Breast epithelium (tissue), 4 donors: ENCODE measurements at regions of chr12 and their contacts with region 1.

Region 1: GRCh38 chr12:63325757-63326156 is 174.8 kb upstream of the AVPR1A start:
- DNase-seq: no peak
- H3K4me3 ChIP-seq: no peak overlapping the region
- H3K27ac ChIP-seq: no peak overlapping the region
- H3K4me1 ChIP-seq: no peaks in the 10 kb centered on the region
- H3K27me3 ChIP-seq: no peaks in the 10 kb centered on the region
- CTCF ChIP-seq: no peak
- POLR2A ChIP-seq: no peak

Region 2: DNA sequence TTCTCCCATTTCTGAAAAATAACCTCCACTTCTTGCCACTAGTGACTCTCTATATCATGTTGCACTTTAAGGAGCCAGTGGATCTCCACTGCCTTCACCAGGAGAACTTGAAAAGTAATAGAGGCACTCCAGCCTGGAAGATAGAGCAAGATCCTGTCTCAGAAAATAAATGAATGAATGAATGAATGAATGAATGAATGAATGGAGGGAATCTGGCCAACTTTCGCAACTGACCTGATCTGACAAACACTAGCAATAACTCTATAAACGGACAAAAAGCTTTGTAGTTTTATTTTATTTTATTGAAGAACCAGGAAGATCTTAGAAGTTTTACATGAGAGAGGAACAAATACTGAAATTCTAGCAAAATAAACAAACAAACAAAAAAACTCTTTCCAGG is 65.1 kb before region 1 on chr12:
- intact Hi-C with region 1: loop called (anchors 2 kb)
- DNase-seq: no peak
- H3K4me3 ChIP-seq: no peak overlapping the region
- H3K27ac ChIP-seq: no peak overlapping the region
- H3K4me1 ChIP-seq: no peaks in the 10 kb centered on the region
- H3K27me3 ChIP-seq: no peaks in the 10 kb centered on the region
- CTCF ChIP-seq: no peak
- POLR2A ChIP-seq: no peak

Region 3: GRCh38 chr12:63387771-63388170 is 62.0 kb after region 1 on chr12:
- intact Hi-C with region 1: no loop called
- DNase-seq: no peak
- H3K4me3 ChIP-seq: no peak overlapping the region
- H3K27ac ChIP-seq: no peak overlapping the region
- H3K4me1 ChIP-seq: no peaks in the 10 kb centered on the region
- H3K27me3 ChIP-seq: no peaks in the 10 kb centered on the region
- CTCF ChIP-seq: no peak
- POLR2A ChIP-seq: no peak

Region 4: DNA sequence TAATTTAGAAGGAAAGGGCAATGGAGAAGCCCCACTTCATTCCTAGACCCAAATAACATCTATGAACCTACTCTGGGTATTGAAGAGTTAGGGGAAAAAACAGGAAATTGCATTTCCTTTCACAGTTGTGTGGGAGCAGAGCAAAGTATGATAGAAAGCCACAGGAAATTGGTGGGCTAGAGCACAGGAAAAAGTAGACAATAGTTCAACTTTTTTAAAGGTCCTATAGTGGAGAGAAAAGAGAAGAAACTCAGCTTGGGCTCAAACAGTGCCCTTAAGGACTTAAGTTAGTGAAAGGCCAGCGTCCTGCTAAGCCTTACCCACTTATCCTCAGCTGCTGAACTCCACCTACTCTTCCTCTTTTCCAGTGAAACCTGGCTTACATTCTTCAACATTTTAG is 84.4 kb after region 1 on chr12:
- intact Hi-C with region 1: no loop called
- DNase-seq: no peak
- H3K4me3 ChIP-seq: no peak overlapping the region
- H3K27ac ChIP-seq: no peak overlapping the region
- H3K4me1 ChIP-seq: no peaks in the 10 kb centered on the region
- H3K27me3 ChIP-seq: no peaks in the 10 kb centered on the region
- CTCF ChIP-seq: no peak
- POLR2A ChIP-seq: no peak